ENCODE measurements at regions of chr11 and their contacts with region 1.

Region 1: GRCh38 chr11:47938791-47939560 is 41.4 kb upstream of the PTPRJ start:
- DNase-seq: no peak
- H3K4me3 ChIP-seq: no peak overlapping the region
- H3K27ac ChIP-seq: no peak overlapping the region
- H3K4me1 ChIP-seq: peaks cover 0 to 14% (median 0%) of the 10 kb centered on the region in 4 donors
- H3K27me3 ChIP-seq: no peaks in the 10 kb centered on the region
- CTCF ChIP-seq: no peak

Region 2: DNA sequence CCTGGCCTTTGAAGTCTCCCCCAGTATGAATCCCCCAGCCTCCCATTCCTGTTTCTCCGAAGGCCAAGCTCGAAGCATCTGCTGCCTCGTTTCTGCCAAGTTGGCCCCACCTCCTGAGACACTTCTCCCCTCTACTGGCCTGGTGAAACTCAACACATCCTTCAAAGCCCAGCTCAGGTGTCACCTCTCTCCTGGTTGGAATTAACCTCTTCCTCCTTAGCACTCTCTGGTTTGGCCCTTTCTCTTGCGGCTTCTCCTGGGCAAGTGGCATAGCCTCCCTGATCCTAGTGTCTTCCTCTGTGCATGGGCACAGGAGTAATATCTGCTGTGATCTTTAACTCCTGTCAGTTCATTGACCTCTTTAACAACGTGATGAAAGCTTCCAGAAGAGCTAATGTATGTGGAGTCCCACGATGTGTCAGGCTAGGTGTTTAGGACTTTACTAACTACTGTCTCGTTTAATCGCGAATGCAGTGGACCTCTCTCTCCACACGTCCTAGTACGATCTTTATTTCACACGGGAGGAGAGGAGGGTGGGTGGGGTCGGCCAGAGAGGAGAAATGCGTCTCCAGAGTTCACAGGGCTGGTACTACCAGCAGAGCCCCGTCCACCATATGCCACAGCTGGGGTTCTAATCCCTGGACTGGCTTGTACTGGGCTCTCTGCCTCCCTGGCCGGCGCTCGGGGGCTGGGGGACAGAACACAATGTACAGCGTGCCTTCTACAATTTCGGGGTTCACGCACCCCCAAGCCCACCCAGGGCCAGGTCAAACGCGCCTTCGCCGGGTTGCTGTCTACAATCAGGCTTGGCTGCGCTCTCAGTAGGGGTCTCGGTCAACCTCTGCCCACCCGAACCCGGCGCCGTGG is 40.6 kb after region 1 on chr11:
- intact Hi-C with region 1: loop called (anchors 5 kb)
- DNase-seq: no peak
- H3K4me3 ChIP-seq: peak overlapping the region; percentile 71 to 85
- H3K27ac ChIP-seq: peak overlapping the region; percentile 67 to 70
- H3K4me1 ChIP-seq: peaks cover 0 to 28% (median 18%) of the 10 kb centered on the region in 4 donors
- H3K27me3 ChIP-seq: no peaks in the 10 kb centered on the region
- CTCF ChIP-seq: no peak